ENCODE measurements at regions of chr12 and their contacts with region 1.

Region 1: GRCh38 chr12:109264095-109264942 is 44.8 kb downstream of the FOXN4 start:
- DNase-seq: peak; percentile 77 to 85 (median 85)
- ATAC-seq: peak; percentile 94
- H3K4me3 ChIP-seq: no peak overlapping the region
- H3K4me1 ChIP-seq: no peaks in the 10 kb centered on the region
- CTCF ChIP-seq: peak; percentile 63

Region 2: DNA sequence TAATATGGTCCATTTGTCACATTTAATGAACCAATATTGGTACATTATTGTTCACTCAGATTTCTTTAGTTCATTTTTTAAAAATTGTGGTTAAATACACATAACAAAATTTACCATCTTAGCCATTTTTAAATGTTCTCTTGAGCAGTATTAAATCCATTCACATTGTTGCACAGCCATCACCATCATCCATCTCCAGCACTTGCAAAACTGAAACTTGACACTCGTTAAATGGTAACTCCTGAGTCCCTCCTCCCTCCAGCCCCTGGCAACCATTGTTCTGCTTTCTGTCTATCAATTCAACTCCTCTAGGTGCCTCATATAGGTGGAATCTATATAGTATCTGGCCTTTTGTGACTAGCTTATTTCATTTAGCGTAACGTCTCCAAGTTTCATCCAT is 61.5 kb before region 1 on chr12:
- intact Hi-C with region 1: no loop called
- DNase-seq: no peak
- ATAC-seq: no peak
- H3K4me3 ChIP-seq: no peak overlapping the region
- H3K4me1 ChIP-seq: no peaks in the 10 kb centered on the region
- CTCF ChIP-seq: no peak

Region 3: DNA sequence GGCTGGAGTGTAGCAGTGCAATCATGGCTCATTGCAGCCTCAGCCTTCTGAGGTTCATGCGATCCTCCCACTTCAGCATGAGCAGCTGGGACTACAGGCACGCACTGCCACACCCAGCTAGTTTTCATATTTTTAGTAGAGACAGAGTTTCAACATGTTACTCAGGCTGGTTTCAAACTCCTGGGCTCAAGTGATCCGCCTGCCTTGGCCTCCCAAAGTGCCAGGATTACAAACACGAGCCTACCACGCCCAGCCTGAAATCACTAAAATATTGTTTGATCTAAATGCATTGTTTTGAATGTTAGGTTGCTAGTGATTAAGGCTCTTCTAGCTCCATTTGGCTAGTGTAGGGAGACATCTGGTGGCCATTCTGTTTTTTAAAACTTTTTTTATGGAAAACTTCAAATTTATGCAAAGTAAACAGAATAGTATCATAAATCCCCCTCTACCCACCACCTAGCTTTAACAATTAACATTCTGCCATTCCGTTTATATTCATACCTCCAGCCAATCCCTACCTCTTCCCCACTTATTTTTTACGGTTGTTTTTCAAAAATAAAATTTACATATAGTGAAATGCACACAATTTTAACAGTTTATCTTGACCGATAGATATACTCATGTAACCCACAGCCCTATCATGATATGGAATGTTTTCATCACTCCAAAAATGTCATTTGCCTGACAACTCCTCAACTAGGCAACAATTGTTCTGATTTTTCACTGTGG is 121.2 kb after region 1 on chr12:
- intact Hi-C with region 1: loop called (anchors 5 kb)
- DNase-seq: peak in 2 of 3 donors; percentile 22 to 30
- ATAC-seq: peak; percentile 69
- H3K4me3 ChIP-seq: no peak overlapping the region
- H3K4me1 ChIP-seq: no peaks in the 10 kb centered on the region
- CTCF ChIP-seq: no peak